GM10248 (cell line): ENCODE measurements at regions of chr18 and their contacts with region 1.

Region 1: GRCh38 chr18:63578357-63578958 is 8.7 kb upstream of the SERPINB13 start:
- DNase-seq: peak; percentile 21
- CTCF ChIP-seq: peak; percentile 78

Region 2: GRCh38 chr18:63511286-63511685 is 67.2 kb before region 1 on chr18:
- CTCF ChIA-PET with region 1: interaction called, 179 read pairs
- POLR2A ChIA-PET with region 1: no interaction called
- DNase-seq: no peak
- CTCF ChIP-seq: peak; percentile 57

Region 3: DNA sequence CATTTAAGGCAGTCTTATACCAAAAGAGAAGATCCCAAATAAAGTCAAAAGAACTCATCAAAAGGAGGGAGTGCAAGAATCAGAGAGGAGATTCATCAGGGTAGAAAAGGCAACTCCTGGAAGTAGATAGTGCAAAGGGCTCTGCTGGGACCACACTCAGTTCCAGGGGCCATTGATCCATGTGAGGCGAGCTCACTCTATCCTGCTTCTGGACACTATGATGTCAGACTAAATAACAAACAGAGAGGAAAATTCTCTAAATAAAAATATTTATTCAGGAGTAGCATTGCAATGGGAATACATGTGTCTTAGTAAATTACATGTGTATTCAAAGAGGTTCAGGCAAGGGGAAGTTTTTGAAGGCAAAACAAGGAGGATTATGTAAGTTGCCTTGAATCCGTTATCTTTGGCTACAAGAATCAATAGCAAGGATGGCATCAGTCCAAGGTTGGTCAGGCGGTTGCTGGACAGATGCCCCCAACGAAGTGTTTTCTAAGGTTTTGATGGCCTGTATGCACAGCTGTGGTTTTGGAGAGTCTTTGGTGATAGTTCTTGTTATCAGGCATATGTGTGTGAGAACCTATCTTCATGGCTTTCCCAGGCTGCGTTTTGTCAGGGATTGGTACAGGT is 49.5 kb before region 1 on chr18:
- CTCF ChIA-PET with region 1: interaction called, 10 read pairs
- POLR2A ChIA-PET with region 1: no interaction called
- DNase-seq: no peak
- CTCF ChIP-seq: no peak

Region 4: DNA sequence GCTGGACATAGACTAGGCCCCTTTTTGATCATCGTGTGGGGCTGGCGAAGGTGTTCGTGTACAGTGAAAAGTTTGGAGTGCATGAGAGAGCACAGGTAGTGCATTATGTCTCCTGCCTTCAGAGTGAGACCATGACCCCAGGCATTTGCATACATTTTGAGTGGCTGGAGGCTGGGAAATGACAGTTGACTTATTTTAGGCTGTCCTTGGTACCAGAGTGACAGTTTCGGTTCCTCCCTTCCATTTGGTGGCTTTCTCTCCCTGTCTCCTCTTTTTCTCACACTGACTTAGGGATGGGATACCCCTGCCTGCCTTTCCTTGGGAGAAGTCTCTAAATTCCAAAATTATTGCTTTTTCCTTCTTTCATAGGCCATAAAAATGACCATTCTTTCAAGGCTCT is 16.2 kb before region 1 on chr18:
- CTCF ChIA-PET with region 1: interaction called, 156 read pairs
- POLR2A ChIA-PET with region 1: no interaction called
- DNase-seq: no peak
- CTCF ChIP-seq: no peak

Region 5: GRCh38 chr18:63590373-63590772 is 11.9 kb after region 1 on chr18:
- CTCF ChIA-PET with region 1: interaction called, 23 read pairs
- POLR2A ChIA-PET with region 1: no interaction called
- DNase-seq: no peak
- CTCF ChIP-seq: no peak

Region 6: GRCh38 chr18:63664571-63664970 is 86.1 kb after region 1 on chr18:
- CTCF ChIA-PET with region 1: no interaction called
- POLR2A ChIA-PET with region 1: no interaction called
- DNase-seq: no peak
- CTCF ChIP-seq: no peak